Psoas muscle (tissue), 8 donors: ENCODE measurements at regions of chr2 and their contacts with region 1.

Region 1: GRCh38 chr2:64943387-64944150 is 45.6 kb upstream of the SLC1A4 start:
- DNase-seq: peak; percentile 87 to 95
- ATAC-seq: peak; percentile 91 to 96 (median 94)
- H3K4me3 ChIP-seq: peak overlapping the region; percentile 43
- H3K27ac ChIP-seq: peak overlapping the region; percentile 88
- H3K4me1 ChIP-seq: peaks cover 48% of the 10 kb centered on the region
- H3K27me3 ChIP-seq: no peaks in the 10 kb centered on the region
- CTCF ChIP-seq: no peak

Region 2: GRCh38 chr2:64846179-64846578 is 97.4 kb before region 1 on chr2:
- intact Hi-C with region 1: no loop called
- DNase-seq: no peak
- ATAC-seq: no peak
- H3K4me3 ChIP-seq: no peak overlapping the region
- H3K27ac ChIP-seq: no peak overlapping the region
- H3K4me1 ChIP-seq: no peaks in the 10 kb centered on the region
- H3K27me3 ChIP-seq: no peaks in the 10 kb centered on the region
- CTCF ChIP-seq: no peak

Region 3: DNA sequence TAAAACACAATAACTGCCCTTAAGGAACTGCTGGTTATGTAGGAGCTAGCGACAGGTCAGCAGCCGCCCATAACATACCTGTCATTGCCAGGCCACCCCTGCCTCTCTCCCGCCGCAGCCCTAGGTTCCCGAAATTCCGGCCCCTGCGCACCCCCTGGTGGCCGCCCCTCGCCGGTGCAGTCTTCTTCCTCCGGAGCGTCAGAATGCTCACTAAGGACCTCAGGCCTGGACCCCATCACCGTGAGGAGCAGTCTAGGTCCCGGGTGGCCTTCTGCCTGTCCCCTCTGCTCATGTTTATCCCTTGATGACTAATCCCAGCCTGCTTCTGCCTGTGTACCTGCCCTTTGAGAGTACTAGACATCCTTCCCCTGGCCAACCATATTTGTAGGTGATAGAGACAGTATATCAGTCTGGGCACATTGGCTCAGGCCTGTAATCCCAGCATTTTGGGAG is 70.1 kb before region 1 on chr2:
- intact Hi-C with region 1: no loop called
- DNase-seq: peak; percentile 77 to 85
- ATAC-seq: peak; percentile 88 to 97 (median 92)
- H3K4me3 ChIP-seq: peak overlapping the region; percentile 30
- H3K27ac ChIP-seq: no peak overlapping the region
- H3K4me1 ChIP-seq: peaks cover 10% of the 10 kb centered on the region
- H3K27me3 ChIP-seq: no peaks in the 10 kb centered on the region
- CTCF ChIP-seq: peak; percentile 96

Region 4: DNA sequence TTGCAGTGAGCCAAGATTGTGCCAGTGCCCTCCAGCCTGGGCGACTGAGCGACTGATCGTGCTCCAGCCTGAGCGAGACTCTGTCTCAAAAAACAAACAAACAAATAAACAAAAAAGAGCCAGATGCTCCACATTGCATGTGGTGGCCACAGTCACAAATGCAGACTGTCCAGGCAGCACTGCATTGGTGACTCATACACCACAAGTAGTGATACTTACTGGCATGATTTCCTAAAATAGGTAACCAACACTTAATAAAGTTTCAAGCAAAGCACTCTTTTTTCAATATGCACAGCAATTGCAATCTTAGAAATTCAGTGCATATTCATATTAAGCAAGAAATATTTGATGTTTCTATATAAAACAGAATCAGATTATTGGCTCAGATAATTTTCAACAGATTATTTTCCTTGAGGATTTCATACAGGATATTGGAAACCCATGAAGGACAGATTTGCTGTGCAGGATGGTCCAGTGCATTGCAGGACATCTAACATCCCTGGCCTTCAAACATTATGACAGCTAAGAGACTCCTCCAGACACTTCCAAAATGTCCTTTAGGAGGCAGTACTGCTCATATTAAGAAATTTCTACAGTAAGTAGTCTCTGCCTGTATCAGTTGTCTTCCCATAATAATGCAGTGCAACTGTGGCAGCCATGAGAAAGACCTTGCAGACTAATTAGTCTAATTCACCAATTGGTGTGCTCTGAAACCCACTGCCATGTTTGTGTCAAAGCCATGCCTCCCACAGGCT is 35.1 kb after region 1 on chr2:
- intact Hi-C with region 1: loop called (anchors 5 kb)
- DNase-seq: no peak
- ATAC-seq: peak; percentile 36 to 43 (median 39)
- H3K4me3 ChIP-seq: no peak overlapping the region
- H3K27ac ChIP-seq: peak overlapping the region; percentile 48
- H3K4me1 ChIP-seq: peaks cover 47% of the 10 kb centered on the region
- H3K27me3 ChIP-seq: no peaks in the 10 kb centered on the region
- CTCF ChIP-seq: peak; percentile 24

Region 5: DNA sequence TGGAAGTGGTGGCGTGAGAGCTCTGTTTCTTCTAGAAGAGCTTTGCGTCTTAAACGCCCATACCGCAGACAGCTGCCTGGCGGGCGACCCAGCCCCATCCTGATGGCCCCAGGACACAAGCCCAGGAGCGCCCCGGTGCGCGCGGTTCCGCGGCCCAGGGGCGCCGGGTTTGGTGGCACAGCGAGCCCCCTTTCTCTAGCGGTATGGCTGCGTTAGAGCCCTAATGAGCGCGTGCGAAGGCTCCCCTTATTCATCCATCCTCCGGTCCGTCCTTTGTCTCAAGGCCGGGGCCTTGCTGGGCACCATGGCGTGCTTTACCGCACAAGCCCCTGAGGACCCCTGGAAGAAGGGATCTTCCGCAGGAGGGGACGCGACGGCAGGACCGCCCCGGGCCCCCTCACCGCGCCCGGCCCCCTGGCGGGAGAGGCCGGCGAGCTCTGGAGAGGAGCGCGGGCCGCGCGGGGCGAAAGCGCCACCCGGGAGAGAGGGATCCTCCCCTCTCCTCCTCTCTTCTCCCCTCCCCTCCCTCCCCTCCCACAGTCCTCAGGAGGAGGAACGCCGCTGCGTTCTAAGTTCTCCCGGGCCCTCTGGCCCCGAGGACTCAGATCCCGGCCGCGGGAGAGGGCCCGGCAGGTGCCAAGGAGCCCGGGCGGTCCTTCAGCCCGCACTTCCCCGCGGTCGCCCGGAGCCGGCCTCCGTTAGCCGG is 45.0 kb after region 1 on chr2:
- intact Hi-C with region 1: loop called in 1 of 2 experiments (anchors 5 kb)
- DNase-seq: peak; percentile 72 to 78
- ATAC-seq: peak; percentile 69 to 79 (median 73)
- H3K4me3 ChIP-seq: peak overlapping the region; percentile 98
- H3K27ac ChIP-seq: peak overlapping the region; percentile 100
- H3K4me1 ChIP-seq: peaks cover 24% of the 10 kb centered on the region
- H3K27me3 ChIP-seq: no peaks in the 10 kb centered on the region
- CTCF ChIP-seq: peak; percentile 44